Mucosa of descending colon (tissue), 3 donors: ENCODE measurements at regions of chr15 and their contacts with region 1.

Region 1: GRCh38 chr15:27723821-27724220 is 375.3 kb downstream of the OCA2 start:
- DNase-seq: no peak
- ATAC-seq: no peak
- H3K4me3 ChIP-seq: no peak overlapping the region
- H3K4me1 ChIP-seq: no peaks in the 10 kb centered on the region
- CTCF ChIP-seq: no peak

Region 2: DNA sequence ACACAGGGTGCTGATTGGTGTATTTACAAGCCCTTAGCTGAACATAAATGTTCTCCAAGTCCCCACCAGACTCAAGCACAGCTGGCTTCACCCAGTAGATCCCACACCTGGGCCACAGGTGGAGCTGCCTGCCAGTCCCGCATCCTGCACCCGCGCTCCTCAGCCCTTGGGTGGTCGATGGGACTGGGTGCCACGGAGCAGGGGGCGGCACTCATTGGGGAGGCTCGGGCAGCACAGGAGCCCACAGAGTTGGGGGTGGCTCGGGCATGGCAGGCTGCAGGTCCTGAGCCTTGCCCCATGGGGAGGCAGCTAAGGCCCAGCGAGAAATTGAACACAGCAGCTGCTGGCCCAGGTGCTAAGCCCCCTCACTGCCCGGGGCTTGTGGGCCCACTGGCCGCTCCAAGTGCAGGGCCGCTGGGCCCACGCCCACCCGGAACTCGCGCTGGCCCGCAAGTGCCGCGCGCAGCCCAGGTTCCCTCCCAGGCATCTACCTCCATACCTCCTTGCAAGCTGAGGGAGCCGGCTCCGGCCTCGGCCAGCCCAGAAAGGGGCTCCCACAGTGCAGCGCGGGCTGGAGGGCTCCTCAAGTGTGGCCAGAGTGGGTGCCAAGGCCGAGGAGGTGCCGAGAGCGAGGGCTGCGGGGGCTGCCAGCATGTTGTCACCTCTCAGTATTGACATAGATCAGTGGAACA is 67.4 kb before region 1 on chr15:
- intact Hi-C with region 1: loop called in 1 of 2 experiments (anchors 10 kb)
- DNase-seq: peak in 1 of 3 donors; percentile 31
- ATAC-seq: no peak
- H3K4me3 ChIP-seq: no peak overlapping the region
- H3K4me1 ChIP-seq: no peaks in the 10 kb centered on the region
- CTCF ChIP-seq: no peak

Region 3: DNA sequence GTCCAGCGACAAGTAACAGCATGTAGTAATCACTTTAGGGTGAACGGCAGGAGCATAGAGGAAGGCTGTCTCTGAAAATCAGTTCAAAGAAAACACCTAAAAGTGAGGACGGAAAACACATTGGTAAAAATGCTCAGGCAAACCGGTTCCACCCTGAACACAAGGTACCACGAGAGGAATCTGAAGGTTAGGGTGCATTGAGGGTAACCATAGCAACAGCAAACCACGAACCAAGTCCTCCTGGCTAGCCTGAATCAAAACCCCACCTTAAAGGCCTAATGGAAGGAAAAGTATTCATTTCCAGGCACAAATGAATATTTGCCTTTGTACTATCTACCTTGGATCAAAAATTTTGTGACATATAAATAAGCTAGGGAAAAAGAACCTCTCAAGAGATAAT is 60.3 kb after region 1 on chr15:
- intact Hi-C with region 1: loop called in 1 of 2 experiments (anchors 10 kb)
- DNase-seq: no peak
- ATAC-seq: no peak
- H3K4me3 ChIP-seq: no peak overlapping the region
- H3K4me1 ChIP-seq: no peaks in the 10 kb centered on the region
- CTCF ChIP-seq: no peak

Region 4: DNA sequence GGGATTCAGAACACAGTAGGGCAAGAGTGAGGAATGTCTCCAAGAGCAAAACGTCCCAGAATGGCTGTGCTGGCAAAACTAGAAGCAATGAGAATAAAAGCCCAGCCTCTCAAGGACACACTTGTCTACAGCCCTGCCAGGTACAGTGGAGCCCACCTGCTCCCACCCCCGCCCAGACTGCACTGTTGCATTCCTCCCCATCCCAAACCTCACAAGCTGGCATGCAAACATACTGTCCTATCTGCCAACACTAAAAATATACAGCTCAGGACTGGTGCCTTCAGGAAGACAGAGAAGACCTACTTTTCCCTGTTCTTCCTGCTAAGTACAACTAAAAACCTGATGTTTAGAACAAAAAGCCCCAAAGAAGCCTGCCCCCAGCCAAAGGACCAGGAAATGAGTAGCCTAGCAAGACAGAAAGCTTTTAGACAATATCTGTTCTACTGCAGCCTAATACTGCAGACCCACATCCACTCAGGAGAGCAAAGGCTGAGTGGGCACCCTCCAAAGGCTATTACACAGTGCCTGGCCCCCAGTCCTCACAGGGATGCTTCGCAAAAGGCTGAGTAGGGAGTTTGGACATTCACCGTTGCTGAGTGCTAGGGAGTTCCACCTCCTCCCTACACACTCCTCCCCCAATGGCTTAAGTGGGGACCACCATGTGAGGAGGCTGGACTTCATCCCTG is 361.8 kb after region 1 on chr15:
- intact Hi-C with region 1: no loop called
- DNase-seq: no peak
- ATAC-seq: no peak
- H3K4me3 ChIP-seq: no peak overlapping the region
- H3K4me1 ChIP-seq: peaks cover 11% of the 10 kb centered on the region
- CTCF ChIP-seq: no peak